Right ventricle myocardium superior (tissue), 1 donor: ENCODE measurements at regions of chr5 and their contacts with region 1.

Region 1: GRCh38 chr5:95846554-95847260 is 24.2 kb upstream of the GLRX start:
- DNase-seq: peak; percentile 58
- ATAC-seq: peak; percentile 78

Region 2: DNA sequence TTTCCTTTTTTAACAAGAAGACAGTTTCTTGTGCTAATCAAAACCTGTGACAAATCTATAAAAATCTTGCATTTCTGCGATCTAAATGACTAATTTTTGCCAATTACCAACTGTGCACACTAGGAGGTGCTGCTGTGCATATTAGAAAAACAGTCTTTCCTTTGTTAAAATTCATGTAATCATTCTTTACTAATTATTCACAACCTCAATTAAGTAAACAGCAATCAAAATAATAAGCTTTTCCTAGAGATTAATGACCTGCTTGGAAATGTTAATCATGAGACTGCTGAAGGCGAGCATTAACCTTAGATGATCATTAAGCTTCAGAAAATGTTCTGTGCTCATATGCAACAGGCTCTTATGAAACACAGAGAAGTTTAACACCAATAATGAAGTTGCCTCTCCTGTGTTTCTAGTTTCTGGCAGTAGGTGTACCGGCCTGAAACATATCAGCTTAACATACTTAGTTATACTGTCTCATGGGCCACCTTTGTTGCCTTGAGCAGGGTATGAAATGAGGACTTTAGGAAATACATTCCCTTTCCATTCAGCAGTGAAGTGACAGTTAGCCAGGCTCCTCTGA is 182.4 kb before region 1 on chr5:
- intact Hi-C with region 1: loop called (anchors 2 kb)
- DNase-seq: no peak
- ATAC-seq: peak; percentile 60

Region 3: GRCh38 chr5:95684361-95684760 is 162.3 kb before region 1 on chr5:
- intact Hi-C with region 1: no loop called
- DNase-seq: no peak
- ATAC-seq: no peak

Region 4: DNA sequence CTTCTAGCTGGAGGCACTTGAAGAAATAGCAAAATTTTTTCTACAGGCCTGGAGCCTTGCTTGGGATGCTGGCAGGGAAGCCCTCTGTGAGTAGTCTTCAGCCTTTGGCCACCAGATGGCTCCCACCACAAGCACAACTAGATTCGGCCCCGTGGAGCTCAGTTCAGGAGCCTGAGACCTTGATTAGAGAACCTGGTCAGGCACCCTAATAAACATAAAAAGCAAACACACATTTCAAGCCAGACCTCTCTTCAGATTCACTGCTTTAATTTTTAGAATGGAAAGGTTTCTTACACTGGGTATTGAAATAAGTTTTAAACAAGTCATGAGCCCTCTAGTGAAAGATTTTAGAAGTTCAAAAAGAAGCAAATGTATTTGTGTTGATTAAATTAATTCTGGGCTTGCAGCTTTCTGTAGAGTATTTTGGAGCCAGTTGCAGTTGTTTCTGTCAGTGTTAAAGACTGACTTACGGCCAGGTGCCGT is 65.6 kb before region 1 on chr5:
- intact Hi-C with region 1: loop called (anchors 2 kb)
- DNase-seq: peak; percentile 85
- ATAC-seq: peak; percentile 93